Sciatic nerve (tissue), 2 donors: ENCODE measurements at regions of chr18 and their contacts with region 1.

Region 1: DNA sequence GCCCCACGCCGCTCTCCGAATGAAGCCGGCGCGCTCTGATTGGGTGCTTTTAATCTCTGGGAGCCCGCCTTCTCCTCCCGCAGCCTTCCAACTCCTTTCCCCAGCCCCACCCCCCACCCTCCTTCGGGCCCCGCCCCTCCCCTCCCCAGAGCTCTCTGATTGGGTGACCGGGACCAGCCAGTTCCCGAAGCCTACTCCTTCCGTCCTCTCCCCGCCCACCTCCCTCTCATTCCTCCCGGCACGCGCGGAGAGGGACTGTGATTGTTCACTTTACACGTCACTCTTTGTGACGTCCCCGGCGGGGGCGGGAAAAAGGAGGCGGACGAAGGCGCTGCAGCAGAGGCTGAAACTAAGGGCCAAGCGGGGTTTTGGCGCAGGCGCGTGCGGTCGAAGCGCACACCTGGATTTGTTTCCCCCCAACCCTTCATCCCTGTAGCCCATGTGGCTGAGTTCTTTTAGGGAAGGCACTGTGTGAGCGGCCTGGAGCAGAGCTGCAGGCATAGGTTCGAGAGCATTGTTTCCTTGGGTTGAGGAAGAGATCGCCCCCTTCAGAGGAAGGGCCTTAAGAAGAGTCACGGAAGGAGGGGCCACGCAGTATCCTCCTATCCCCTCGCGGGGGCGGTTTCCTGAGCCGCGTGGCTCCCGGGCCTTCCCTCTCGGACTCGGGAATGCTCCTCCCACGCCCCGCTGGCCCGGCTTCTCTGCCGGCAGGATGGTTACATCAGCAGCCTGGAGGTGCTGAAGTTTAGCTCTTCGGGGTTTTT is at the start of gene MEX3C:
- DNase-seq: peak; percentile 100
- ATAC-seq: peak; percentile 98
- total RNA-seq, gene MEX3C: 31.9 TPM

Region 2: DNA sequence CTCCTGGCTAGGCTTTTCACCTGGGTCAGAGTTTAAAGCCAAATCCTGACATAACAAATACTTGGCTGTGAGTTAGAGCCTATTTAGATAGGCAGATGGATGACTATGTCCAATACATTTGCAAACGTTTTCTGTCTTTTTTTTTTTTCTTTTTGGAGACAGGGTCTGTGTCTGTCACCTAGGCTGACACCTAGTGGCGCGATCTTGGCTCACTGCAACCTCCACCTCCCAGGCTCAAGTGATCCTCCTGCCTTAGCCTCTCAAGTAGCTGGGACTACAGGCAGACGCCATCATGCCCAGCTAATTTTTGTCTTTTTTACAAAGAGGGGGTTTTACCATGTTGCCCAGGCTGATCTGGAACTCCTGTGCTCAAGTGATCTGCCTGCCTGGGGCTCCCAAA is 1862.2 kb before region 1 on chr18:
- intact Hi-C with region 1: loop called (anchors 5 kb)
- DNase-seq: no peak
- ATAC-seq: no peak

Region 3: GRCh38 chr18:51051105-51051712 is 146.6 kb before region 1 on chr18:
- intact Hi-C with region 1: no loop called
- DNase-seq: no peak
- ATAC-seq: peak; percentile 70